GM13976 (cell line): ENCODE measurements at regions of chr19 and their contacts with region 1.

Region 1: DNA sequence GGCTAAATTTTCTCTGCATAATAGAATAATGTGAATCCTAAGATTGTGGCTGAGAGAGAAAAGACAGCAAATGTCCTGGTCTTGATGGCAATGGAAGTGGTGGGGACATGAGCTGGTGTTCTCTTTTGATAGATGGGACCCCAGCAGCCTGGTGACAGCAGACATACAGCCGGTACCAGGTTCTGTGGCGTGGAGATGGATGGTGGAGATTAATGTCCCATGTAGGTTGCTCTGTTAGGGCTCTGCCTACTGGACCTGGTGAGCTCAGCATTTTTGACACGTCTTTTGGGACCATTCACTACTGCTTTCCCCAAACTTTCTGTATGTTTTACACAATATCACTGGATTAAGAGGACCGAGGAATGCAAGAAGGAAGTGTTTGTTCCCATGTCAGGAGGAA is 8.2 kb upstream of the SIGLEC14 start:
- DNase-seq: no peak
- CTCF ChIP-seq: no peak

Region 2: GRCh38 chr19:51473009-51473707 is 181.6 kb before region 1 on chr19:
- in situ Hi-C with region 1: loop called (anchors 5 kb)
- DNase-seq: peak; percentile 77
- CTCF ChIP-seq: peak; percentile 82